B cell (primary cell): ENCODE measurements at regions of chr7 and their contacts with region 1.

Region 1: GRCh38 chr7:30026229-30027064 is at the start of gene FKBP14:
- DNase-seq: peak; percentile 94
- ATAC-seq: peak; percentile 76
- H3K4me3 ChIP-seq: peak within 1 kb of the TSS; percentile 84 to 97 (median 90)
- H3K4me3 Mint-ChIP-seq: peak within 1 kb of the TSS; percentile 90
- H3K27ac ChIP-seq: peak within 1 kb of the TSS; percentile 77 to 84
- H3K27ac Mint-ChIP-seq: peak within 1 kb of the TSS; percentile 95
- H3K4me1 ChIP-seq: peaks cover 20 to 27% of the 10 kb centered on the region in 2 donors
- H3K4me1 Mint-ChIP-seq: peaks cover 30% of the 10 kb centered on the region
- H3K27me3 ChIP-seq: no peaks in the 10 kb centered on the region
- H3K27me3 Mint-ChIP-seq: no peaks in the 10 kb centered on the region
- CTCF ChIP-seq: no peak
- total RNA-seq, gene FKBP14: 4.2 and 5.7 TPM in 2 replicates

Region 2: GRCh38 chr7:30134611-30135545 is 108.4 kb after region 1 on chr7 and contains the start of gene MTURN:
- CTCF ChIA-PET with region 1: no interaction called
- POLR2A ChIA-PET with region 1: no interaction called
- intact Hi-C with region 1: loop called (anchors 1 kb)
- DNase-seq: peak; percentile 92
- ATAC-seq: peak; percentile 83
- H3K4me3 ChIP-seq: peak within 1 kb of the TSS; percentile 63 to 95 (median 83)
- H3K4me3 Mint-ChIP-seq: peak within 1 kb of the TSS; percentile 98
- H3K27ac ChIP-seq: peak within 1 kb of the TSS in 1 of 2 donors; percentile 39
- H3K27ac Mint-ChIP-seq: peak within 1 kb of the TSS; percentile 93
- H3K4me1 ChIP-seq: peaks cover 0 to 18% of the 10 kb centered on the region in 2 donors
- H3K4me1 Mint-ChIP-seq: peaks cover 18% of the 10 kb centered on the region
- H3K27me3 ChIP-seq: peaks cover 0 to 3% (median 1%) of the 10 kb centered on the region in 4 experiments
- H3K27me3 Mint-ChIP-seq: peaks cover 11% of the 10 kb centered on the region
- CTCF ChIP-seq: no peak
- total RNA-seq, gene MTURN: 13.9 and 16.5 TPM in 2 replicates

Region 3: DNA sequence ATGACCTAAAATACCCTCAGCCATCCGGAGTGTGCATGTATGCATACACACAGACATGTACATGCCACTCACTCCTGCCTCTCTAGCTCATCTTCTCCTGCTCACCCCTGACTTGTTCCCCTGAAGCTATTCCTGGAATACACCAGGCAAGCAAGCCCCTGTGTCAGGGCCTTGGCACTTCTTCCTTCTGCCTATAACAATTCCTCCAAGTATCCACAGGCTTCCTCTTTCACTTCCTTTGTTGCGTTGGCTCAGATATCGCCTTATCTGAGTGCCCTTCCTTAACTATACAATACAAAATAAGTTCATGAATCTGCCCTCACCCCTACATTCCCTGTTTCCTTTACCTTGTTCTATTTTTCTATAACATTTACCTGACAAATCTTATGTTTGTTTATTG is 363.3 kb after region 1 on chr7:
- CTCF ChIA-PET with region 1: no interaction called
- POLR2A ChIA-PET with region 1: no interaction called
- intact Hi-C with region 1: no loop called
- DNase-seq: no peak
- ATAC-seq: no peak
- H3K4me3 ChIP-seq: no peak overlapping the region
- H3K4me3 Mint-ChIP-seq: no peak overlapping the region
- H3K27ac ChIP-seq: no peak overlapping the region
- H3K27ac Mint-ChIP-seq: no peak overlapping the region
- H3K4me1 ChIP-seq: peaks cover 0 to 5% of the 10 kb centered on the region in 2 donors
- H3K4me1 Mint-ChIP-seq: peaks cover 6% of the 10 kb centered on the region
- H3K27me3 ChIP-seq: no peaks in the 10 kb centered on the region
- H3K27me3 Mint-ChIP-seq: no peaks in the 10 kb centered on the region
- CTCF ChIP-seq: no peak

Region 4: GRCh38 chr7:30445770-30446169 is 419.3 kb after region 1 on chr7:
- CTCF ChIA-PET with region 1: no interaction called
- POLR2A ChIA-PET with region 1: no interaction called
- intact Hi-C with region 1: loop called (anchors 5 kb)
- DNase-seq: peak; percentile 91
- ATAC-seq: peak; percentile 100
- H3K4me3 ChIP-seq: no peak overlapping the region
- H3K4me3 Mint-ChIP-seq: no peak overlapping the region
- H3K27ac ChIP-seq: peak overlapping the region in 1 of 2 donors; percentile 64
- H3K27ac Mint-ChIP-seq: peak overlapping the region; percentile 75
- H3K4me1 ChIP-seq: peaks cover 12% of the 10 kb centered on the region in 2 donors
- H3K4me1 Mint-ChIP-seq: peaks cover 8% of the 10 kb centered on the region
- H3K27me3 ChIP-seq: no peaks in the 10 kb centered on the region
- H3K27me3 Mint-ChIP-seq: no peaks in the 10 kb centered on the region
- CTCF ChIP-seq: peak; percentile 71

Region 5: DNA sequence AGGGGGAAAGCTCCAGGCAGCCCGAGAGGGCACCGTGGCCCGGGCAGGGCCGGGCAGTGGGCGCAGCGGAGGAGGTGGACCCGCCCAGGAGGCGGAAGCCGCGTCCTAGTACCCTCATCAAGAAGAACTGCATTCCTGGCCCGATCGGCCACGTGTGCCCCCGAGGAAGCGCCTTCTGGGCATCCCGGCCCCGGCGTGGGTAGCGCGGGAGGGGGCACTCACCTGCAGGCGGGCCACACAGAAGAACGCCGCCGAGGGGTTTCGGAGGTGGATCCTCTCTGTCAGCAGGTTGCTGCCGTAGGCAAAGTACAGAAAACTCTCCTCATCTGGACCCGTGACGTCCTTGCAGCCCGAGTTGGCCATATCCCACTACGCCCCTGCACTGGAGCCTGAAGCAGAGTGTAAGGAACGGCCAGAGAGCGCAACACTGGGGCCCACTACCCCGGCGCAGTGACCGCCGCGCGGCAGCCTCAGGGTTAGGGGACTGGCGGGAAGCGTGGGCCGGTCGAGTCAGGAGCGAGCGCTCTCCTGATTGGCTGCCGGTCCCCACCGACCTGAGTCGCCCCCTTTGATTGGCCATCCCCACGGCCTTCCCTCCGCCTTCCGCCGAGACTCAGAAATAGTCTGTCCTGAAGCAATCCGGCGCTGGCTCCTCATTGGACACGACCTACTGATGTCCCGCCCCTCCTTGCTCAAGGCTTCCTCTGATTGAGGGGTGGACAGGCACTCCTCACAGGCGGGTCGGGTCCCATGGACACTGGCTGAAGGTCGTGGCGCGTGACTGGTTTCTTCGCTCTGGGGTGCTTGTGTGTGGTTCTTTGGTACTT is 478.1 kb after region 1 on chr7 and contains the start of gene GGCT:
- CTCF ChIA-PET with region 1: no interaction called
- POLR2A ChIA-PET with region 1: no interaction called
- intact Hi-C with region 1: loop called (anchors 1 kb)
- DNase-seq: peak; percentile 97
- ATAC-seq: peak; percentile 97
- H3K4me3 ChIP-seq: peak within 1 kb of the TSS; percentile 75 to 99 (median 84)
- H3K4me3 Mint-ChIP-seq: peak within 1 kb of the TSS; percentile 93
- H3K27ac ChIP-seq: peak within 1 kb of the TSS; percentile 34 to 71
- H3K27ac Mint-ChIP-seq: peak within 1 kb of the TSS; percentile 92
- H3K4me1 ChIP-seq: peaks cover 18 to 20% of the 10 kb centered on the region in 2 donors
- H3K4me1 Mint-ChIP-seq: peaks cover 33% of the 10 kb centered on the region
- H3K27me3 ChIP-seq: no peaks in the 10 kb centered on the region
- H3K27me3 Mint-ChIP-seq: no peaks in the 10 kb centered on the region
- CTCF ChIP-seq: no peak
- total RNA-seq, gene GGCT: 12.5 and 12.6 TPM in 2 replicates